CD4-positive, alpha-beta memory T cell (primary cell): ENCODE measurements at regions of chr4 and their contacts with region 1.

Region 1: GRCh38 chr4:36244257-36245079 is at the start of gene ARAP2:
- DNase-seq: peak; percentile 75 to 80 (median 79)
- H3K4me3 ChIP-seq: peak within 1 kb of the TSS; percentile 73 to 93
- H3K4me3 Mint-ChIP-seq: peak within 1 kb of the TSS; percentile 92 to 99 (median 96)
- H3K27ac ChIP-seq: peak within 1 kb of the TSS; percentile 89
- H3K27ac Mint-ChIP-seq: peak within 1 kb of the TSS; percentile 94 to 98 (median 96)
- H3K4me1 ChIP-seq: peaks cover 42% of the 10 kb centered on the region
- H3K4me1 Mint-ChIP-seq: peaks cover 25 to 50% (median 40%) of the 10 kb centered on the region in 4 donors
- H3K27me3 ChIP-seq: no peaks in the 10 kb centered on the region
- H3K27me3 Mint-ChIP-seq: no peaks in the 10 kb centered on the region
- total RNA-seq, gene ARAP2: 89.6 to 97.4 TPM

Region 2: DNA sequence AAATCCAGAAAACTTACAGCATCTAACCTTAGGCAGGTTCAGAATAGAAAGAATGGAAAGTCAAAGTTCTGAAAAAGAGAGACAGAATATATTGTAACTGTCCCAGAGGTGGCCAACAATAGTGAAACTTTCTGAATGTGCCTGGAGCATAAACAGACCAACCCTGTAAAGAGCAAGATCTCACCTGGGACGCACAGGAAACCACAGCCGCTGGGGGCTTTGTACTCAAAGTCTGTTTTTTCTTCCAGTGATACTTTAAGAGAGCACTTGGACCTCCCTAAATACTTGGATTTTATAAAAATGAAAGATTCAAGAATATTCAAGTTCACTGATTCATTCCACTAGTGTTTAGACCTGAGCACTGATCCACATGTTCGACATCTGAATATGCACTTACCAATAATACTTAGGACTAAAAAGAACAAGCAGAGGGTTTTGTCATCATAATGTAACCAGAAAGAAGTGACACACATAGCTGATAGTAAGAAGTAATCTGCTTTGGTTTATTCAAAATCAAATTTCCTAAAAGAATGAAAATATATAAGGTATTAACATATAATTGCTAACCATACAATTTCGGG is 35.5 kb before region 1 on chr4:
- CTCF ChIA-PET with region 1: interaction called, 9 read pairs
- POLR2A ChIA-PET with region 1: interaction called, 7 read pairs
- intact Hi-C with region 1: loop called (anchors 5 kb)
- DNase-seq: peak; percentile 33 to 48 (median 43)
- H3K4me3 ChIP-seq: no peak overlapping the region
- H3K4me3 Mint-ChIP-seq: peak overlapping the region in 7 of 8 donors; percentile 25 to 85 (median 64)
- H3K27ac ChIP-seq: no peak overlapping the region
- H3K27ac Mint-ChIP-seq: peak overlapping the region; percentile 4 to 91 (median 66)
- H3K4me1 ChIP-seq: peaks cover 40% of the 10 kb centered on the region
- H3K4me1 Mint-ChIP-seq: peaks cover 37 to 78% (median 54%) of the 10 kb centered on the region in 4 donors
- H3K27me3 ChIP-seq: no peaks in the 10 kb centered on the region
- H3K27me3 Mint-ChIP-seq: no peaks in the 10 kb centered on the region

Region 3: DNA sequence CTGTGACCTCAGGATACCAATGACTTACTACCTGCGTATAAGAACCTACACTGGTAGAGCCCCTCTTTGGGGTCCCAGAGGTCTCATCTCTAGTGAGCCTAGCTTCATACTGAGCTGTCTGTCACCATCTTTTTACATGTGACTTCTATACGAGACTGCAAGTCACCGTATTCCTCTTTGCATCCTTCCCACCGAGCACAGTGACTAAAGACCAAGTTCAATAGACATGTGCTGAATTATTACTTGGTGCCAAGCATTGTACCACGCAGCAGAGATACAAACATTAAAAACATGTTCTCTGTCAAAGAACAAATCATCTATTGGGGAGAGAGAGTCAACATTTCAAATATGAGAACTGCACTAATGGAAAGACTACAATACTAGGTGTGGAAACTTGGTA is 16.6 kb before region 1 on chr4:
- CTCF ChIA-PET with region 1: interaction called, 6 read pairs
- POLR2A ChIA-PET with region 1: interaction called, 52 read pairs
- intact Hi-C with region 1: loop called (anchors 1 kb)
- DNase-seq: no peak
- H3K4me3 ChIP-seq: no peak overlapping the region
- H3K4me3 Mint-ChIP-seq: peak overlapping the region; percentile 1 to 70 (median 37)
- H3K27ac ChIP-seq: no peak overlapping the region
- H3K27ac Mint-ChIP-seq: peak overlapping the region in 3 of 7 donors; percentile 14 to 32 (median 25)
- H3K4me1 ChIP-seq: peaks cover 87% of the 10 kb centered on the region
- H3K4me1 Mint-ChIP-seq: peaks cover 65 to 95% (median 81%) of the 10 kb centered on the region in 4 donors
- H3K27me3 ChIP-seq: no peaks in the 10 kb centered on the region
- H3K27me3 Mint-ChIP-seq: no peaks in the 10 kb centered on the region

Region 4: DNA sequence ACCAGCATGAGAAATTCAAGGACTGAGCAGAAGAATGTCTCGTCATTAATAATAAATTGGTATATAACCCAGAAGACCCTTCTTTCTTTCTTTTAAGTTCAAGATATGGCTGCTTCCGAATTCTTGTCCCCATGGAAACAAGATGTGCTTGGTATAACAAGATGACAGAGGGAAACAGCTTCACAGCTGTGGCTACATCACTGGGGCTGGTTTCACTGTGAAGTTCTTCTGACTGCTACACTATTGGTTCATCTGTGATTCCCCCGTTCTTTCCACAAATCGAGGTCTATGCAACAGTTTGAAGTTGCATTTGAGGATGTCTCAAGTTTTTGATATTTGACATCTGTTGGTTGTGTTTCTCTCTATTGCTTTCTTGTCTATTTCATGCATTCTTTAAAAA is 24.6 kb after region 1 on chr4:
- CTCF ChIA-PET with region 1: interaction called, 14 read pairs
- POLR2A ChIA-PET with region 1: interaction called, 21 read pairs
- intact Hi-C with region 1: no loop called
- DNase-seq: peak; percentile 56 to 81 (median 76)
- H3K4me3 ChIP-seq: no peak overlapping the region
- H3K4me3 Mint-ChIP-seq: peak overlapping the region in 4 of 8 donors; percentile 9 to 51 (median 39)
- H3K27ac ChIP-seq: peak overlapping the region; percentile 44
- H3K27ac Mint-ChIP-seq: peak overlapping the region; percentile 76 to 94 (median 89)
- H3K4me1 ChIP-seq: peaks cover 26% of the 10 kb centered on the region
- H3K4me1 Mint-ChIP-seq: peaks cover 21 to 36% (median 27%) of the 10 kb centered on the region in 4 donors
- H3K27me3 ChIP-seq: no peaks in the 10 kb centered on the region
- H3K27me3 Mint-ChIP-seq: no peaks in the 10 kb centered on the region

Region 5: GRCh38 chr4:36325499-36325898 is 81.0 kb after region 1 on chr4:
- CTCF ChIA-PET with region 1: interaction called, 10 read pairs
- POLR2A ChIA-PET with region 1: interaction called, 32 read pairs
- intact Hi-C with region 1: loop called (anchors 2 kb)
- DNase-seq: peak; percentile 13 to 48 (median 25)
- H3K4me3 ChIP-seq: no peak overlapping the region
- H3K4me3 Mint-ChIP-seq: peak overlapping the region in 6 of 8 donors; percentile 4 to 63 (median 46)
- H3K27ac ChIP-seq: peak overlapping the region; percentile 22
- H3K27ac Mint-ChIP-seq: peak overlapping the region; percentile 47 to 87 (median 81)
- H3K4me1 ChIP-seq: peaks cover 41% of the 10 kb centered on the region
- H3K4me1 Mint-ChIP-seq: peaks cover 38 to 63% (median 46%) of the 10 kb centered on the region in 4 donors
- H3K27me3 ChIP-seq: no peaks in the 10 kb centered on the region
- H3K27me3 Mint-ChIP-seq: no peaks in the 10 kb centered on the region

Region 6: DNA sequence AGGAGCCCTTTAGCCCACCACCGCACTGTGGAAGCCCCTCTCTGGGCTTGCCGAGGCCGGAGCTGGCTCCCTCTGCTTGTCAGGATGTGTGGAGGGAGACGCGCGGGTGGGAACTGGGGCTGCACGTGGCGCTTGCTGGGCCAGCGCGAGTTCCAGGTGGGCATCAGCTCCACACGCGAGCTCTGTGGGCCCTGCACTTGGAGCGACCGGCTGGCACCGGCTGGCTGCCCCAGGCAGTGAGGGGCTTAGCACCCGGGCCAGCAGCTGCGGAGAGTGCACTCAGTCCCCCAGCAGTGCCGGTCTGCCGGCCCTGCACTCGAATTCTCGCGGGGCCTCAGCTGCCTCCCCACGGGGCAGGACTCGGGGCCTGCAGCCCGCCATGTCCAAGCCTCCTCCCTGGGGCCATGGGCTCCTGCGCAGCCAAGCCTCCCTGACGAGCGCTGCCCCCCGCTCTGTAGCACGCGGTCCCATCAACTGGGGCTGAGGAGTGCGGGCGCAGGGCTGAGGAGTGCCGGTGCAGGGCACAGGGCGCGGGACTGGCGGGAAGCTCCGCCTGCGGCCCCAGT is 130.5 kb after region 1 on chr4:
- CTCF ChIA-PET with region 1: no interaction called
- POLR2A ChIA-PET with region 1: no interaction called
- intact Hi-C with region 1: no loop called
- DNase-seq: no peak
- H3K4me3 ChIP-seq: no peak overlapping the region
- H3K4me3 Mint-ChIP-seq: no peak overlapping the region
- H3K27ac ChIP-seq: no peak overlapping the region
- H3K27ac Mint-ChIP-seq: no peak overlapping the region
- H3K4me1 ChIP-seq: no peaks in the 10 kb centered on the region
- H3K4me1 Mint-ChIP-seq: no peaks in the 10 kb centered on the region
- H3K27me3 ChIP-seq: no peaks in the 10 kb centered on the region
- H3K27me3 Mint-ChIP-seq: peaks cover 0 to 1% of the 10 kb centered on the region in 2 donors

Region 7: DNA sequence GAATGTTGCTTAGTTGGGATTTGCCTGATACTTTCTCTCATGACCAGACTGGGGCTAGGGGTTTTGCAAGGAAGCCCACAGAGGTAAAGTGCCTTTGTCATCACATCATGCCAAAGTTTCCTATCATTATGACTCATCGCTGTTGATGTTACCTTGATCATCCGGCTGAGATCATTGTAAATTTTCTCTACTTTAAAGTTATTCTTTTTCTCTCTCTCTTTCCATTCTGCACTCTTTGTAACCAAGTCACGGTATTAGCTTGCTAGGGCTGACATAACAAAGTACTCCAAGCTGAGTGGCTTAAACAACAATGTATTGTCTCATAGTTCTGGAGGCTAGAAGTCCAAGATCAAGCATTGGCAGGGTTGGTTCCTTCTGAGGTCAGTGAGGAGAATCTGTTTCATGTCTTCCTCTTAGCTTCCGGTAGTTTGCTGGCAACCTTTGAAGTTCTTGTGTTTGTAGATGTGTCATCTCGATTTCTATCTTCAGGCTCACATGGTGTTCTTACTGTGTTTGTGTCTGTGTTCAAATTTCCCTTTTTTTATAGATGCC is 150.0 kb after region 1 on chr4:
- CTCF ChIA-PET with region 1: interaction called, 15 read pairs
- POLR2A ChIA-PET with region 1: interaction called, 18 read pairs
- intact Hi-C with region 1: no loop called
- DNase-seq: peak; percentile 72 to 91 (median 81)
- H3K4me3 ChIP-seq: no peak overlapping the region
- H3K4me3 Mint-ChIP-seq: peak overlapping the region in 5 of 8 donors; percentile 8 to 76 (median 46)
- H3K27ac ChIP-seq: peak overlapping the region; percentile 34
- H3K27ac Mint-ChIP-seq: peak overlapping the region; percentile 82 to 92 (median 89)
- H3K4me1 ChIP-seq: peaks cover 16% of the 10 kb centered on the region
- H3K4me1 Mint-ChIP-seq: peaks cover 13 to 25% (median 16%) of the 10 kb centered on the region in 4 donors
- H3K27me3 ChIP-seq: no peaks in the 10 kb centered on the region
- H3K27me3 Mint-ChIP-seq: no peaks in the 10 kb centered on the region

Region 8: DNA sequence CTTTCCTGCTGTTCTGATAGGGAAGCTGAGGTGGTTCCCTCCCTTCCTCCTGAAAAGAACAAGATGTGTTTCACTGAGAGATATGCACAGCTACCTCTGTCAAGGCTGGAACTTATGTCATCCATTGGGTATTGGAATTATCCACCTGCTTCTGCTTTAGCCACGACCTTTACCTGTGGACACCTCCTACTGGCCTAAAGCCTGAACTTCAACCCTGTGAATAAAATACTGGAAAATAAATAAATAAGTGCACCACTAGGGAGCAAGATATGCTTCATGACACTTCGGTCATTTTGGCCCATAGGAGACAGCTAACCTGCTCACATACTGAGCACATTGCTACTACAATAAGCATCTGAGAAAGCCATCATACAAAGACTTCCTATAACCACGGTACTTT is 580.2 kb after region 1 on chr4:
- CTCF ChIA-PET with region 1: no interaction called
- POLR2A ChIA-PET with region 1: no interaction called
- intact Hi-C with region 1: no loop called
- DNase-seq: no peak
- H3K4me3 ChIP-seq: no peak overlapping the region
- H3K4me3 Mint-ChIP-seq: no peak overlapping the region
- H3K27ac ChIP-seq: no peak overlapping the region
- H3K27ac Mint-ChIP-seq: no peak overlapping the region
- H3K4me1 ChIP-seq: no peaks in the 10 kb centered on the region
- H3K4me1 Mint-ChIP-seq: no peaks in the 10 kb centered on the region
- H3K27me3 ChIP-seq: no peaks in the 10 kb centered on the region
- H3K27me3 Mint-ChIP-seq: peaks cover 1 to 2% of the 10 kb centered on the region in 2 donors